ENCODE measurements at regions of chr6 and their contacts with region 1.

Region 1: DNA sequence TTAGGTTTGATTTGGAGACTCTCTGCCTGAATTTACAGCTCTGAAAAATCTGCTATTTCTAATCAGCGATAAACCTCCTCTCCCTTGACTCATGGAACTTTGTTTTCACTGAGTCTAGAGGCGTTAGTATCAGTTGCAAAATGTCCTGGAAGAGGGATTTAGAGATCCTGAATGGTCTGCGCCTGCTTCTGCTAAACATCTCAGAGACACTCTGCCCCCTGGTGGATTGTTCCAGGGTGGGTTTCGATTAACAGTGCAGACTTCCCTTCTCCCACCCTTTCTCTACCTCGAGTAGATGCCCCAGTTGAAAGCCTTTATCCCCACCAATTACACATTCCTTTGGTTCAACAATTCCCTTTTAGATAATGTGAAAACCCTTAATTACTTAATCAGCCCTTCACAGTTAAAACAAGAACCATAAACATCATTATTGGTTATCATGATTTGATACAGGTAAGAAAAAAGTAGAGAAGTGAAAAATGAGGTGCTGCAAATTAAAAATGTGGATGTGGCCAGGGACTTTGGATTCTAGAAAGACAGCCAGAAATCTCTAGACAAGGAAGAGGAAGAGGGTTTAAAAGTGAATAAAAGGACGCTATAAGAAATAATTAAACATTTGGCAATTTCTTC is 5.5 kb downstream of the HTR1B start:
- DNase-seq: peak; percentile 43
- ATAC-seq: peak; percentile 67
- H3K4me3 ChIP-seq: no peak overlapping the region
- H3K27ac ChIP-seq: peak overlapping the region; percentile 88
- H3K4me1 ChIP-seq: peaks cover 18% of the 10 kb centered on the region
- H3K27me3 ChIP-seq: no peaks in the 10 kb centered on the region
- CTCF ChIP-seq: peak; percentile 83

Region 2: DNA sequence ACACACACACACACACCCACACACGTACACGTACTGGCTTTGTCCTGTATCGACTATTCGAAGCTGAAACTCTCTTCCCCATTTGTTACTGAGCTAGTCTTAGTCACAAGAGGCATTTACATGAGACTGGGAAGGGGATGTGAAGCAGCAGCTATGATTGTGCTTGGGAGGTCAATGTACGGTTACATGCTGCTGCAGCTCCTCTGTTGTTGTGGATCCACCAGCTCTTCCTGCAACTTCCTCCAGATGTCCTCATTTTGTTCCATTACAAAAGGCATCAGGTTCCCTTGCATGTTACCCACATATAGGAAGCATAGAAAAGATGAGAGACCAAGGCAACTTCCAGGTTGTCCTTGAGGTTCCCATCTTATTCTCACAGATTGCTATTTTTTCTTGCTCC is 773.0 kb before region 1 on chr6:
- CTCF ChIA-PET with region 1: interaction called, 3 read pairs
- POLR2A ChIA-PET with region 1: no interaction called
- in situ Hi-C with region 1: no loop called
- intact Hi-C with region 1: loop called (anchors 2 kb)
- DNase-seq: no peak
- ATAC-seq: no peak
- H3K4me3 ChIP-seq: no peak overlapping the region
- H3K27ac ChIP-seq: no peak overlapping the region; the same call in 1 of the 2 replicates
- H3K4me1 ChIP-seq: no peaks in the 10 kb centered on the region; the same call in 1 of the 2 replicates
- H3K27me3 ChIP-seq: no peaks in the 10 kb centered on the region
- CTCF ChIP-seq: peak; percentile 29

Region 3: DNA sequence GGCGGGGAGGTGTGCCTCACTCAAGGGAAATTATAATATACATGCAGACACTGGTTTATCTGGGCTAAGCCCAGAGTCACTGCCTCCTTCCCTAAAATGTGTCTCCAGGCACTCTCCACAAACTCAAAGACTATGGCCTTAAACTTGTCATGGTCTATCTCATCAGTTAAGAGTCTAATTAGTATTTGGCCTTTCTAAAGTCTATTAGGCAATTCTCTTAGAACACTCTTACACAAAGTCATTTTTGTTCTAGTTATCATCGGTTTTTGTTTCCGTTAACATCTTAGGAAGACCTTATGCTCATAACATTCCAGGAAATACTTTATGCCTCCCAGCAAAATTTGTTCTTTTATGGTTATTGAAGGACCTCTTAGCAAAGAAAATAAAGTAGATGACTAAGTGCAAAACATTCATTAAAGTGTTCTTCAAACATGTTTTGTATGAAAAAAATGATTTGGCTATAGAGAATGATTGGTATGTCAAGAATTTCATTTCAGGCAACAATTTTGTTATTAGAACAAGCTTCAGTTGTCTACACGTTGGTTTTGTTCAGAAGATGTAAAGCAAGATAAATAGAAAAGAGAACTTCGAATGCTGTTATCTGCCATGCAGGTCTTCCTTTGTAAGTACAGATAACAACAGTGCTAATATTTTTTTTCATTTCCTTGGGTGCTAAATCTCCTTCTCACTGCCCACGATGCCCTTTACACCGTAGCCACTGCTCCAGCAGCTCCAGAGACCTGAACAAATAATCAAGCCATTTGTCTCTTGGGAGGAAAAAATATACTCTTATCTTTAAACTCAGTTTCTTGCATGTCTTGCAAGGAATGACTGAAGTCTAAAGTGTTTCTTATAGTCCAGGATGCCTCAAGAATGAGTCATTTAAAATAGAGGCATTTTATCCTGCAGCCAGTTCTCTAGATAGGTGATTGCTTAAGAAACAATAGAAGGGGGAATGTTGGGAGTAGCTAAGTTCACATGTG is 165.0 kb before region 1 on chr6:
- CTCF ChIA-PET with region 1: no interaction called
- POLR2A ChIA-PET with region 1: no interaction called
- in situ Hi-C with region 1: no loop called
- intact Hi-C with region 1: loop called (anchors 5 kb)
- DNase-seq: peak; percentile 15
- ATAC-seq: peak; percentile 93
- H3K4me3 ChIP-seq: no peak overlapping the region; a peak in 1 of 4 replicates
- H3K27ac ChIP-seq: peak overlapping the region; percentile 98
- H3K4me1 ChIP-seq: peaks cover 27% of the 10 kb centered on the region
- H3K27me3 ChIP-seq: no peaks in the 10 kb centered on the region
- CTCF ChIP-seq: no peak

Region 4: GRCh38 chr6:77487808-77488425 is 30.1 kb after region 1 on chr6:
- CTCF ChIA-PET with region 1: no interaction called
- POLR2A ChIA-PET with region 1: no interaction called
- in situ Hi-C with region 1: no loop called
- intact Hi-C with region 1: no loop called
- DNase-seq: no peak
- ATAC-seq: peak; percentile 58
- H3K4me3 ChIP-seq: no peak overlapping the region
- H3K27ac ChIP-seq: no peak overlapping the region
- H3K4me1 ChIP-seq: no peaks in the 10 kb centered on the region; the same call in 1 of the 2 replicates
- H3K27me3 ChIP-seq: no peaks in the 10 kb centered on the region
- CTCF ChIP-seq: no peak